ENCODE measurements at regions of chr12 and their contacts with region 1.

Region 1: GRCh38 chr12:26701604-26702215 is 131.3 kb downstream of the ITPR2 start:
- DNase-seq: no peak
- H3K4me3 ChIP-seq: no peak overlapping the region
- CTCF ChIP-seq: peak; percentile 26

Region 2: GRCh38 chr12:26119391-26119981 is 582.2 kb before region 1 on chr12:
- CTCF ChIA-PET with region 1: interaction called, 17 read pairs
- POLR2A ChIA-PET with region 1: no interaction called
- DNase-seq: peak; percentile 33
- H3K4me3 ChIP-seq: no peak overlapping the region
- CTCF ChIP-seq: peak; percentile 58

Region 3: GRCh38 chr12:26434299-26435068 is 267.2 kb before region 1 on chr12:
- CTCF ChIA-PET with region 1: interaction called, 14 read pairs
- POLR2A ChIA-PET with region 1: no interaction called
- DNase-seq: no peak
- H3K4me3 ChIP-seq: no peak overlapping the region
- CTCF ChIP-seq: peak; percentile 73

Region 4: DNA sequence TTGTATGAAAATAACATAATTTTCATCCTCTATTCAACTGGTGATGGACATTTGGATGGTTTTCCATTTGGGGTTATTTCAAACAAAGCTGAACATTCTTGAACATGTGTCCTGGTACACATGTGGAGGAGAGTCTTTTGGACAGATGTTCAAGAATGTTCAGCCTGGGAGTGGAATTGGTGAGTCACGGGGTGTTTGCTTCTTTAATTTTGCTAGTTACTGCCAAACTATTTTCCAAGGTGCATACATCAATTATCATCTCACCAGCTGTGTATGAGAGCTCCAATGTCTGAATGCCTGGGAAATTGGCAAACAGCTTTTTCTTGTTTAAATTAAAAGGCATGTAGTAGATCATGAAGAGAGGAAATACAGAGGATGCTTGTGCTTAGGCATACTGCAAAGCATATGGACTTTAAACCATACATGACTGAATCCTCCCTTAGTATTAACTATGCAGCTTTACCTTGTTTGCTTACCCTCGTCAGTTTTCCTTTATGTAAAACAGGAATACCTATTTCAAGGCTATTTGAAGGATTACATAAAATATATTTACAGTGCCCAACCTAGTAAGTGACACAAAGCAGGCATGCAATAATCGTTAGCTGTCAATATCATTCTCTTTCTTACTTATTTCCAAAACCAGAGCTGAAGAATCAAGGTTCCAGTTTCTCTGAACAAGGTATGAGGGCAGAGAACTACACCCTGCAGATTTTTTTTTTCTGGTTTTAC is 20.8 kb before region 1 on chr12:
- CTCF ChIA-PET with region 1: interaction called, 13 read pairs
- POLR2A ChIA-PET with region 1: no interaction called
- DNase-seq: no peak
- H3K4me3 ChIP-seq: no peak overlapping the region
- CTCF ChIP-seq: no peak